Transverse colon (tissue), 4 donors: ENCODE measurements at regions of chr4 and their contacts with region 1.

Region 1: GRCh38 chr4:52028969-52029368 is 8.8 kb upstream of the LRRC66 start:
- DNase-seq: no peak
- H3K4me3 ChIP-seq: no peak overlapping the region
- H3K27ac ChIP-seq: no peak overlapping the region
- H3K4me1 ChIP-seq: peaks cover 0 to 3% (median 0%) of the 10 kb centered on the region in 4 donors
- H3K27me3 ChIP-seq: no peaks in the 10 kb centered on the region
- CTCF ChIP-seq: no peak
- EP300 ChIP-seq: no peak
- POLR2A ChIP-seq: no peak

Region 2: DNA sequence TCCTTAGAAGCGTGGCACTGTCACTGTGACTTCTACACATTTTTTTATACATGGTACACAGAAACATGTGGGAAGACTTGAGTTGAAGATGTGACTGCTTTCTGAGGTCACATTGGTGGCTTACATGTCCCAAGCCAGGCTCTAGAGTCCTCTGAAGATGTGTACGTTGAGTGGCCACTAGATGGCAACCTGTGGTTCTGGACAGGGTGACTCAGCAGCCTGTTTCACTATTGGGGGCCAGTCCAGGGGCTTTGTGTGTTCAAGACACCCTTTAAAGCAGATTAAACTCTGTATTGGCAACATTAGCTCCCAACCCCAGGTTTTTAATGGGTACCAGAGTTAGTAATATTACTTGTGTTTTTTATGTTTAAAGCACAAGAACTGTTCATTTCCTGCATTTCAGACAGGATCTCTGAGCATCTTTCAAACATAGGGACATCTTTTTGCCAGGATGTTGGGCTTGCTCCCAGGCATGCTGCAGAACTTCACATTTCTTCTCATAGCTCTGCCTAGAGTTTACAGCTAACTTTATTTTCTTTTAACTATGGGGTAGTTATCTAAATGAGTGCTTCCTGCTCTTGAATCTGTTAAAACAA is 133.1 kb before region 1 on chr4:
- in situ Hi-C with region 1: loop called in 3 of 4 experiments (anchors 10 kb)
- intact Hi-C with region 1: loop called (anchors 10 kb)
- DNase-seq: peak; percentile 61
- H3K4me3 ChIP-seq: no peak overlapping the region
- H3K27ac ChIP-seq: peak overlapping the region; percentile 13 to 45 (median 21)
- H3K4me1 ChIP-seq: peaks cover 0 to 10% (median 4%) of the 10 kb centered on the region in 4 donors
- H3K27me3 ChIP-seq: no peaks in the 10 kb centered on the region
- CTCF ChIP-seq: peak; percentile 75 to 82 (median 78)
- EP300 ChIP-seq: no peak
- POLR2A ChIP-seq: no peak

Region 3: DNA sequence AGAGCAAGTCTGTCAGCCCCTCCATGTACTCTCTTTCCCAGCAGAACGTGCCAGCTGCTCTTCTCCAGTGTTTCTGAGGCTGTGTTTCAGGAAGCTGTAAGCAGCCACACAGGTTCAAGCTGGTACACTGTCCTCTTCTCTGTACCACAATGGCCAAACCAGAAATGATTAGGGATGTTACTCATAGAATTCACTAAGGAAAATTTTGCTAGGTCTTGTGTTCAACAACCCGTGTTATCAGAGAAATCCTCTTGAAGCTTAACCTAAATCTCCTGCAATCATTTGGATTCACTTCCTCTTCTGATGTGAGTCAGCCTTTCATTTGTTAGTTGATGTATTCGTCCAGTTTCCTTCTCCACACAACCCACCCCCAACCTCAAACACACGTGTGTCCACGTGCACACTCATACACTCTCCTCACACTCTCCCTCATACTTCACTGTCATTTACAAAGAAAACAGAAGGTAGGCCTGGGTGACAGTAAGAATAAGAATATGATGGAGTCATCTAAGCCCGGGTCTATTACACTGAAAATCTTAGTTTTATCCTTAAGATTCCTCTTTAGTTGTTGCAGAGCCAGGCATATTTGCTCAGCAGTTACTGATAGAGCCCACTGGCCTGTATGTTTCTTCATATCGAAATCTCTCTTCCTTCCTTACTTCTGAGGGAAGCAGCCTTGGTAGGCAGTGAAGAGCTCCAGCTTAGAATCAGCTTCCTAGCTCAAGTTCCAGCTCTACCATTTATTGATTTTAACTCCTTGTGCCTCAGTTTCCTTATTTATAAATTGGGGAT is 122.6 kb before region 1 on chr4:
- in situ Hi-C with region 1: loop called in 1 of 4 experiments (anchors 10 kb)
- intact Hi-C with region 1: no loop called
- DNase-seq: no peak
- H3K4me3 ChIP-seq: no peak overlapping the region
- H3K27ac ChIP-seq: peak overlapping the region; percentile 44 to 76 (median 60)
- H3K4me1 ChIP-seq: peaks cover 6 to 44% (median 30%) of the 10 kb centered on the region in 4 donors
- H3K27me3 ChIP-seq: no peaks in the 10 kb centered on the region
- CTCF ChIP-seq: no peak
- EP300 ChIP-seq: no peak
- POLR2A ChIP-seq: no peak

Region 4: GRCh38 chr4:52199574-52200338 is 170.8 kb after region 1 on chr4:
- in situ Hi-C with region 1: no loop called
- intact Hi-C with region 1: no loop called
- DNase-seq: no peak
- H3K4me3 ChIP-seq: no peak overlapping the region
- H3K27ac ChIP-seq: no peak overlapping the region
- H3K4me1 ChIP-seq: no peaks in the 10 kb centered on the region
- H3K27me3 ChIP-seq: no peaks in the 10 kb centered on the region
- CTCF ChIP-seq: no peak
- EP300 ChIP-seq: no peak
- POLR2A ChIP-seq: no peak

Region 5: GRCh38 chr4:52376132-52376704 is 347.2 kb after region 1 on chr4:
- in situ Hi-C with region 1: no loop called
- intact Hi-C with region 1: no loop called
- DNase-seq: no peak
- H3K4me3 ChIP-seq: no peak overlapping the region
- H3K27ac ChIP-seq: no peak overlapping the region
- H3K4me1 ChIP-seq: no peaks in the 10 kb centered on the region
- H3K27me3 ChIP-seq: no peaks in the 10 kb centered on the region
- CTCF ChIP-seq: peak; percentile 57 to 73 (median 62)
- EP300 ChIP-seq: no peak
- POLR2A ChIP-seq: no peak

Region 6: GRCh38 chr4:52894443-52894842 is 865.5 kb after region 1 on chr4:
- in situ Hi-C with region 1: no loop called
- intact Hi-C with region 1: no loop called
- DNase-seq: no peak
- H3K4me3 ChIP-seq: no peak overlapping the region
- H3K27ac ChIP-seq: no peak overlapping the region
- H3K4me1 ChIP-seq: no peaks in the 10 kb centered on the region
- H3K27me3 ChIP-seq: no peaks in the 10 kb centered on the region
- CTCF ChIP-seq: no peak
- EP300 ChIP-seq: no peak
- POLR2A ChIP-seq: no peak